ENCODE measurements at regions of chr12 and their contacts with region 1.

Region 1: DNA sequence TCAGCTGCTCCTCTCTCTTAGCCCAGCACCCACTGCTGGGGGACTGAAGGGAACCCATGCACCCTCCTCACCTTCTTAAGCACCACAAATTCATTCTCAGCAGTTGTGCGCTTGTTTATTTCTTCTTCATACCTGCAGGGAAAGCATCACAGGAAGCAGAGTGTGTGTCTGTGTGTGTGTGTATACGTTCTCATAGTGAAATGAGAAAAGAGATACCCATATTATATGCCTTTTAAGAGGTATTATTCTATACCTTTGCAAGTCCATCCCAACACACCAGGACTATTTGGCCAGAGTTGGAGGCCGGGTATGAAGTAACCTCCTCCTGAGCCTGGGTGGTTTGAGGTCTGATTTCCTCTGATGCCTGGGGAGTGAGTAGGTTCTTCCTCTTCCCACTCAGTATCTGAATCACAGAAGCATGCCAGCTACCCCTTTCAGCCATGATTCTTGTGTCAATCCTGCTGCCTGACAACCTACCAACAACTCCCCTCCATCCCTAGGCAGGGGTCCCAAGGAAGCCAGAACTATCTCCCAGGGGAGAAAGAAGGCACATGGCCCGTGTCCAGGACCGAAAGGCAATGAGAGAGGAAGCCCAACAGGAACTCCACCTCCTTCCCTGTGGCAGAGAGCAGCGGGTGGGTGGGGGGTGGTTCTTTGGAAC is 3.0 kb downstream of the KRT73 start:
- DNase-seq: peak in 4 of 10 donors; percentile 31 to 71 (median 62)
- ATAC-seq: peak; percentile 36 to 41
- H3K4me3 Mint-ChIP-seq: peak overlapping the region; percentile 7 to 84 (median 66)
- H3K27ac Mint-ChIP-seq: peak overlapping the region; percentile 91 to 100 (median 96)
- H3K4me1 Mint-ChIP-seq: peaks cover 53 to 88% (median 85%) of the 10 kb centered on the region in 4 donors
- H3K27me3 Mint-ChIP-seq: no peaks in the 10 kb centered on the region

Region 2: GRCh38 chr12:52582971-52583456 is 32.3 kb before region 1 on chr12:
- POLR2A ChIA-PET with region 1: interaction called, 130 read pairs
- DNase-seq: peak; percentile 30 to 84 (median 74)
- ATAC-seq: peak in 1 of 2 donors; percentile 29
- H3K4me3 Mint-ChIP-seq: no peak overlapping the region
- H3K27ac Mint-ChIP-seq: peak overlapping the region; percentile 4 to 96 (median 88)
- H3K4me1 Mint-ChIP-seq: peaks cover 46 to 58% (median 56%) of the 10 kb centered on the region in 4 donors
- H3K27me3 Mint-ChIP-seq: peaks cover 0 to 1% (median 0%) of the 10 kb centered on the region in 5 donors

Region 3: DNA sequence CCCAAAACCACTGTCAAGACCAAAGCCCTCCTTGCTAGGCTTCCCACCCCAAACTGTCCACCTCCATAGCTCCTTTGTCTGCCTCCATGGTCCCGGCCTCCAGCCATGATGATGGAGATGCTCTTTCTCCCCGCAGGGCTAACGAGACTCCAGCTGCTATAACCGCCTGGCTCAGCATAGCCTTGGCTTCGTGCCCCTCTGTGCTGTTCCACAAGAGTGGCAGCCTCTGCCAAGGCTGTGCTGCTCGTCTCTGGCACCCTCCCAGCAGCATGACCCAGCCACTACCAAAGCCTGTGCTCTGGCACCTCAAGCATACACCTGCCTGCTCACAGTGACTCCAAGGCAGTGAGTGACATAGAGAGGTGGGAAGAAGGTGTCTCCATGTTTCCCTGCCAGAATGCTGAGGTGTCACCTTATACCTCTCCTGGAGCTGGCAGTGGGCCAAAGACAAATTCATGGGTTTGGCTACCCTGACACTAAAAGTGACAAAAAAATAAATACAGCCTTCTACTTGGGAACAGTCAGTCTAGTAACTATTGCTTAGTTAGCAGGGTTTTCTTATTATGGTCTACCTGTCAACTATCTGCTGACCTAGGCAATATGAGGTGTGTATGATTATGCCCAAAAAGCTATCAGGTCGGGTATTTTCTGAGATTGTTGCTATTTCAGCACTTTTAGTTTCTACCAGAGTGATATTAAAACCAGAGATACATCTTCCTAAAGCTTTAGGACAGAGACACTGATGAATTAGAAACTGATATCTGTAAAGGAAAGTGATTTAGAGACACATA is 19.1 kb after region 1 on chr12:
- POLR2A ChIA-PET with region 1: interaction called, 100 read pairs
- DNase-seq: no peak
- ATAC-seq: no peak
- H3K4me3 Mint-ChIP-seq: peak overlapping the region in 7 of 10 donors; percentile 18 to 54 (median 35)
- H3K27ac Mint-ChIP-seq: peak overlapping the region; percentile 45 to 98 (median 92)
- H3K4me1 Mint-ChIP-seq: peaks cover 42 to 68% (median 67%) of the 10 kb centered on the region in 4 donors
- H3K27me3 Mint-ChIP-seq: no peaks in the 10 kb centered on the region

Region 4: DNA sequence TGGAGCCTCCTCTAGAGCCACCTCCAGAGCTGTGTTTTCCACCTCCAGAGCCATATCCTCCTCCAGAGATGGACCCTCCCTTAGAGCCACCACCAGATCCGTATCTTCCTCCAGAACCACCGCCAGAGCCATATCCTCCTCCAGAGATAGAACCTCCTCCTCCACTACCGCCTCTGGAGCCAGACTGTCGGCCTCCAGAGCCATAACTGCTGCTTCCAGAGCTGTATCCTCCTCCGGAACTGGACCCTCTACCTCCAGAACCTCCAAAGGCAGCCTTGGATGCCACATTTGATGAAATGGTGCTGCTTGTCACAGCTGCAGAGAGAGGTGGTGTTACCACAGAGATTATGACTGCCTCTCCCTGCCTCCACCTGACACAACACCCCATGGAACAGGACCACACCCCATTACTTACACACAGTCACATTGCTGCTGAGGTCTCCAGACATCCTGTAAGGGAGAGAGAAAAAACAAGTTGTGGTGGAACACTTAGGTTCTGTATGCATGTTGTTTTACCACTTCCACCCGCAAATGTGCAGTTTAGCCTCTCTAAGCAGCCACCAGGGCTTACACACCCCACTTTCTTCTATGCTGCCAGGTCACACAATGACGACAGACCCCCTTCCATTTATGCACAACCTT is 29.9 kb after region 1 on chr12:
- POLR2A ChIA-PET with region 1: interaction called, 55 read pairs
- DNase-seq: peak in 9 of 10 donors; percentile 44 to 96 (median 83)
- ATAC-seq: peak; percentile 92
- H3K4me3 Mint-ChIP-seq: peak overlapping the region; percentile 33 to 91 (median 81)
- H3K27ac Mint-ChIP-seq: peak overlapping the region; percentile 95 to 100 (median 100)
- H3K4me1 Mint-ChIP-seq: peaks cover 65 to 93% (median 91%) of the 10 kb centered on the region in 4 donors
- H3K27me3 Mint-ChIP-seq: no peaks in the 10 kb centered on the region

Region 5: GRCh38 chr12:52691076-52691840 is 75.9 kb after region 1 on chr12:
- POLR2A ChIA-PET with region 1: interaction called, 13 read pairs
- DNase-seq: peak; percentile 43 to 78 (median 60)
- ATAC-seq: peak; percentile 88 to 93
- H3K4me3 Mint-ChIP-seq: peak overlapping the region; percentile 85 to 95 (median 92)
- H3K27ac Mint-ChIP-seq: peak overlapping the region; percentile 73 to 96 (median 94)
- H3K4me1 Mint-ChIP-seq: peaks cover 35 to 62% (median 50%) of the 10 kb centered on the region in 4 donors
- H3K27me3 Mint-ChIP-seq: peaks cover 0 to 11% (median 0%) of the 10 kb centered on the region in 5 donors

Region 6: GRCh38 chr12:52870351-52871290 is 255.3 kb after region 1 on chr12:
- POLR2A ChIA-PET with region 1: interaction called, 13 read pairs
- DNase-seq: peak; percentile 68 to 94 (median 84)
- ATAC-seq: peak; percentile 67 to 81
- H3K4me3 Mint-ChIP-seq: peak overlapping the region in 1 of 10 donors; percentile 24
- H3K27ac Mint-ChIP-seq: peak overlapping the region in 9 of 10 donors; percentile 29 to 94 (median 77)
- H3K4me1 Mint-ChIP-seq: peaks cover 24 to 65% (median 52%) of the 10 kb centered on the region in 4 donors
- H3K27me3 Mint-ChIP-seq: peaks cover 0 to 7% (median 0%) of the 10 kb centered on the region in 5 donors